AG04450 (cell line): ENCODE measurements at regions of chr12 and their contacts with region 1.

Region 1: DNA sequence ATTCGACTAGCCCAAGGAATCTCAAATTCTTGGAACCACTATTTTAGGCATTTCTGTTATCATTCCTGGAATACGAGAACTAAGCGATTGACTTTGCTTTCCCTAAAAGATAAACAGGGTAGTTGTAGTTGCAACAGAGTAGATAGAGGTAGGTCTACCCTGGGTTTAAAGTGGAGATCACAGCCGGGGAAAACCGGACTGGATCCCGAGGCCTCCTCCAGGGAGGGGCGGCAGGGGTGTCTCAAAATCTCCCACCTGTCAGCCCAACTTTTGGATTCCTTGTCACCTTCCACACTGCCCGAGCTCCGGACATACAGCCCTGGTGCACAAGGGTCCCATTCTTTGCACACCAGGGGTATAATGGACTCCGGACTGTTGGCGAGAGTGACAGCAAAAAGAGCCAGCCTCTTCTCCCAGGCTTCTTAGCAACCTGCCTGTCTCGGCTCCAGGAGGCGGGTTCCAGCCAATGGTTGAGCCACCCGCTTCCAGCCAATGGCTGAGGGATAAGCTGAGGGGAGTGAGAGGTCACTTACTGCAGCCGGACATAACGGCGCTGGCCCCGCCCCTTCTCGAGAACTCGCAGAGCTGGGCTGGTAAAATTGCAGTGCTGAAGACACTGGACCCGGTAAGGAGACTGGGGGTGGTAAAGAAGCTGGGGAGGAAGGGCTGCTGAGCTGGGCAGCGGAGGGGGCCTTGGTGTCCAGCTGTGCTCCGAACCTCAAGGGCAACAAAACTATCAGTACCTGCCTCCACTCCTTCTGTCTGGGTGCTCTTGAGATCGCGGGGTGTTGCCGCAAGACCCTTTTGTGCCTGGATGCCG is at the start of gene SUOX:
- DNase-seq: peak; percentile 94
- H3K4me3 ChIP-seq: peak within 1 kb of the TSS; percentile 97
- H3K27ac ChIP-seq: peak within 1 kb of the TSS; percentile 52
- H3K27me3 ChIP-seq: no peaks in the 10 kb centered on the region
- CTCF ChIP-seq: no peak
- polyA plus RNA-seq, gene SUOX: 21.0 and 22.8 TPM in 2 replicates

Region 2: DNA sequence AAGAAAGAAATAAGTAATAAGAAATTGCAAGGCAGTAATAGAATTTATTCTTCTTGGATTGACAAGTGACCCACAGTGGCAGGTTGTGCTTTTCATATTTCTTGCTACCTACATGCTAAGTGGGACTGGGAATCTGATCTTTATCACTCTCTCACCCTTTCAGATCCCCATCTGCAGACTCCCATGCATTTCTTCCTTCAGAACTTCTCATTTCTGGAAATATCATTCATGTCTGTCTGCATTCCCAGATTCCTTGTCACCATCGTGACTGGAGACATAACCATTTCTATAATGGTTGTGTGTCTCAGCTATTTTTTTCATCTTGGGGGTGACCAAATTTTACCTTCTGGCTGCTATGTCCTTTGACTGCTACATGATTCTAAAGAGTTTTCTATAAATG is 600.6 kb before region 1 on chr12:
- CTCF ChIA-PET with region 1: no interaction called
- POLR2A ChIA-PET with region 1: no interaction called
- DNase-seq: no peak
- H3K4me3 ChIP-seq: no peak overlapping the region
- H3K27ac ChIP-seq: no peak overlapping the region
- H3K27me3 ChIP-seq: no peaks in the 10 kb centered on the region
- CTCF ChIP-seq: no peak

Region 3: GRCh38 chr12:55973598-55974307 is 23.2 kb before region 1 on chr12 and contains the start of gene RAB5B:
- CTCF ChIA-PET with region 1: interaction called, 29 read pairs
- POLR2A ChIA-PET with region 1: interaction called, 11 read pairs
- DNase-seq: peak; percentile 100
- H3K4me3 ChIP-seq: peak within 1 kb of the TSS; percentile 94
- H3K27ac ChIP-seq: peak within 1 kb of the TSS; percentile 87
- H3K27me3 ChIP-seq: no peaks in the 10 kb centered on the region
- CTCF ChIP-seq: peak; percentile 29; the same call in 1 of the 2 replicates
- polyA plus RNA-seq, gene RAB5B: 136 and 157 TPM in 2 replicates

Region 4: GRCh38 chr12:56007564-56008559 is 10.9 kb after region 1 on chr12:
- CTCF ChIA-PET with region 1: interaction called, 49 read pairs
- POLR2A ChIA-PET with region 1: interaction called, 10 read pairs
- DNase-seq: no peak
- H3K4me3 ChIP-seq: peak overlapping the region; percentile 68
- H3K27ac ChIP-seq: no peak overlapping the region
- H3K27me3 ChIP-seq: no peaks in the 10 kb centered on the region
- CTCF ChIP-seq: no peak

Region 5: GRCh38 chr12:56020423-56021184 is 23.7 kb after region 1 on chr12 and contains the start of gene IKZF4:
- CTCF ChIA-PET with region 1: interaction called, 25 read pairs
- POLR2A ChIA-PET with region 1: interaction called, 5 read pairs
- DNase-seq: no peak
- H3K4me3 ChIP-seq: peak within 1 kb of the TSS; percentile 57
- H3K27ac ChIP-seq: peak within 1 kb of the TSS; percentile 57
- H3K27me3 ChIP-seq: no peaks in the 10 kb centered on the region
- CTCF ChIP-seq: no peak
- polyA plus RNA-seq, gene IKZF4: 3.9 and 4.7 TPM in 2 replicates

Region 6: DNA sequence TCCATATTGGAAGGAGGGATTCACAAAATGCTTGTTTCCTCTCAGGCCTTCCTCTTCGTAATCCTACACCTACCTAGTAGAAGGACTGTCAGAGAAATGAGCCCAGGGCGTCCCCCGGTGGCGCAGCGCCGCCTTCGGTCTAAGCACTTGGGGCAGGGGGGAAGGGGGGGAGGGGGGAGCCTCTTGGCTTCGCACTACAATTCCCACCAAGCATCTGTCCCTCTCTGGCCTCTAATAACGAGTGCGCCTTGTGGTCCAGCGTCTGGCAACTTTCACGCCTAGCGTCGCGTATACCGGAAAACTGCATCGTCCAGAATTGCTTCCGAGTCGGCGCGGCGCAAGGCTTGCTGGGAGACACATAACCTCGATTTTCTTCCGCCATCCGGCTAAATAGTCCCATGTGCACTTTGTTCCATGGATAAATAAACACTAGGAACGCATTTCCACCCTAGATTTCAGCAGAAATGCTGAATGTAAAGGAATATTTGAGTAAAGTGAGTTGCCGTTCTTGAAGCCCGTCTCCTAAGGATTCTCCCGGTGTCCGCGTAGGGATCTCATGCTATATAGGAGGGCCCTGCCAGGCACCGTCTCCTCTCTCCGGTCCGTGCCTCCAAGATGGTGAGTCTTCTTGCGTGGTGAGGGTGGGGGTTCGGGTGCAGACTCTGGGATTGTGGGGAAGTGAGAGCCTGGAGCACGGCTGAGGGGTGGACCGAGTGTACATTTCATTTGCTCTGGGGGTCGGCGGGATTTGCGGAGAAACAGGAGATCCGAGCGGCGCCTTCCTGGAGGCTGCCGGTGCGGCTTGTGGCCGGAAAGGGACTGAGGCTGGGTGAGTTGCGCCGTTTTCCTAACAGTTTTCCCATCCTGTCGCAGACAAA is 44.9 kb after region 1 on chr12 and contains the start of gene RPS26:
- CTCF ChIA-PET with region 1: interaction called, 20 read pairs
- POLR2A ChIA-PET with region 1: no interaction called
- DNase-seq: peak; percentile 99
- H3K4me3 ChIP-seq: peak within 1 kb of the TSS; percentile 92
- H3K27ac ChIP-seq: peak within 1 kb of the TSS; percentile 92
- H3K27me3 ChIP-seq: no peaks in the 10 kb centered on the region
- CTCF ChIP-seq: peak; percentile 46
- polyA plus RNA-seq, gene RPS26: 348 and 382 TPM in 2 replicates